Right ventricle myocardium superior (tissue), 1 donor: ENCODE measurements at regions of chr5 and their contacts with region 1.

Region 1: GRCh38 chr5:128201065-128201926 is 117.7 kb downstream of the SLC12A2 start:
- DNase-seq: peak; percentile 89
- ATAC-seq: peak; percentile 90

Region 2: GRCh38 chr5:126998201-126998631 is 1203.1 kb before region 1 on chr5:
- intact Hi-C with region 1: no loop called
- DNase-seq: no peak
- ATAC-seq: peak; percentile 64

Region 3: GRCh38 chr5:127471211-127471610 is 730.1 kb before region 1 on chr5:
- intact Hi-C with region 1: no loop called
- DNase-seq: no peak
- ATAC-seq: no peak

Region 4: GRCh38 chr5:127564002-127564769 is 637.1 kb before region 1 on chr5:
- intact Hi-C with region 1: loop called (anchors 2 kb)
- DNase-seq: no peak
- ATAC-seq: peak; percentile 83

Region 5: GRCh38 chr5:127746756-127747155 is 454.5 kb before region 1 on chr5:
- intact Hi-C with region 1: loop called (anchors 10 kb)
- DNase-seq: no peak
- ATAC-seq: no peak

Region 6: GRCh38 chr5:127875235-127876021 is 325.9 kb before region 1 on chr5:
- intact Hi-C with region 1: loop called (anchors 10 kb)
- DNase-seq: peak; percentile 53
- ATAC-seq: peak; percentile 91

Region 7: GRCh38 chr5:128121655-128122054 is 79.6 kb before region 1 on chr5:
- intact Hi-C with region 1: no loop called
- DNase-seq: peak; percentile 12
- ATAC-seq: no peak